Breast epithelium (tissue), 4 donors: ENCODE measurements at regions of chr14 and their contacts with region 1.

Region 1: DNA sequence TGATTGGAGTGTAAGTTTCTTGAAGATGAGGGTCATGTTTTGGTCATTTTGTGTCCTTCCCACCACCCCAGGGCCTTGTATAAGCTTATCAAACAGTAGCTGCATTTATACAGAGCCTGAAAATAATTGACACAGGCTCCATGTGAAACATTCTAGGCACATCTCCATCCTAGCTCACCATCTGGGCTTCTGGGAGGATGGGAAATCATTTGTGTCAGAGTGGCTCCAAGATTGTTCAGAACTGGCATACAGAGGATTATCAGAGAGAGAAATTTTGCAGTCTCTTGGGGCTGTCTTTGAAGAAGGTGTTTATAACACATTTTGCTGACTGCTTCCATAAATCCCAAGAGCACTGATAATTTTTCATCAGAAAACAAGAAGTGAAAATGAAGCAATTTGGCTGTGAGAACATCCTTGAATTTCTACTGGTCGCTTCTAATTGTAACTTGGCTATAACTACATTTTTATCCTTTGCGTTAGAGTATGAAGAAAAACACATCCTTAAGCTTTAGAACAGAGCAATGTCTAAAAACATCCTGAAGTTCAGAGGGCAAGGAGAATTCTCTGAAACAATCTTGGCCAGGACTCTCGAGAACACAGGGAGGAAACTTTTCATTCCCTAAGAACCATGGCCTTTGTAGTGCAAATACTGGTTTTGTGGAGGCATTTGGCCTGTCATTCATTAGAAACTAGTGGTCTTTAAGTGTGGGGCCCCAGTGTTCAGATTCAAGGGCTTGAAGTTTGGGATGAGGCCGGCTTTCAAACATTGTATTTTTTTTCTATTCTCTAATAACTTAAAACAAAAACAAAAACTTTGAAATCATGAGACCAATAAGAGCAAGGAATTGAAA is 151.1 kb downstream of the DACT1 start:
- DNase-seq: no peak
- H3K4me3 ChIP-seq: no peak overlapping the region
- H3K27ac ChIP-seq: no peak overlapping the region
- H3K4me1 ChIP-seq: no peaks in the 10 kb centered on the region
- H3K27me3 ChIP-seq: no peaks in the 10 kb centered on the region
- CTCF ChIP-seq: no peak
- POLR2A ChIP-seq: no peak

Region 2: GRCh38 chr14:58341152-58341748 is 447.6 kb before region 1 on chr14:
- intact Hi-C with region 1: no loop called
- DNase-seq: no peak
- H3K4me3 ChIP-seq: no peak overlapping the region
- H3K27ac ChIP-seq: no peak overlapping the region
- H3K4me1 ChIP-seq: no peaks in the 10 kb centered on the region
- H3K27me3 ChIP-seq: no peaks in the 10 kb centered on the region
- CTCF ChIP-seq: no peak
- POLR2A ChIP-seq: no peak

Region 3: GRCh38 chr14:58749066-58749669 is 39.7 kb before region 1 on chr14:
- intact Hi-C with region 1: no loop called
- DNase-seq: no peak
- H3K4me3 ChIP-seq: no peak overlapping the region
- H3K27ac ChIP-seq: no peak overlapping the region
- H3K4me1 ChIP-seq: peaks cover 0 to 10% of the 10 kb centered on the region in 2 donors
- H3K27me3 ChIP-seq: no peaks in the 10 kb centered on the region
- CTCF ChIP-seq: no peak
- POLR2A ChIP-seq: no peak

Region 4: GRCh38 chr14:59009967-59010366 is 221.1 kb after region 1 on chr14:
- intact Hi-C with region 1: loop called (anchors 5 kb)
- DNase-seq: no peak
- H3K4me3 ChIP-seq: no peak overlapping the region
- H3K27ac ChIP-seq: no peak overlapping the region
- H3K4me1 ChIP-seq: no peaks in the 10 kb centered on the region
- H3K27me3 ChIP-seq: no peaks in the 10 kb centered on the region
- CTCF ChIP-seq: no peak
- POLR2A ChIP-seq: no peak

Region 5: GRCh38 chr14:59150990-59151389 is 362.1 kb after region 1 on chr14:
- intact Hi-C with region 1: loop called (anchors 5 kb)
- DNase-seq: no peak
- H3K4me3 ChIP-seq: no peak overlapping the region
- H3K27ac ChIP-seq: no peak overlapping the region
- H3K4me1 ChIP-seq: no peaks in the 10 kb centered on the region
- H3K27me3 ChIP-seq: no peaks in the 10 kb centered on the region
- CTCF ChIP-seq: no peak
- POLR2A ChIP-seq: no peak

Region 6: DNA sequence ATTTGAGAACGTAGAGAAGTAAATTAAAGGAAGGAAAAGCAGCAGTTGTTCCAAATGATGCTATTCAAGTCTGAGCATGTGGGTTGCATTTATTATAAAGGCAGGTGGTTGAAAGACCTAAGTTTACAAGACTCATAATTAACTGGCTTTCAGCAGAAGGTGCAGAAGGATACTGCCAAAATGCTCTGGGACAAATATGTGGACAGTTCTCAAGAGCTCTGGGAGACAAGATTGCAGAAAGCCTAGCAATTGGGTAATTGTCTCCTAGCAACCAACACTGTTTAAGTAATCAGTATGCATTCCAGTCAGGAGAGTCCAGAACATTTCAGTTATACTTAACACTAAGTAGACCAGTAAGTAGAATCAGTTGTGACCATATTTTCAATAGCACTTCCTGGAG is 544.8 kb after region 1 on chr14:
- intact Hi-C with region 1: no loop called
- DNase-seq: peak in 1 of 2 donors; percentile 72
- H3K4me3 ChIP-seq: no peak overlapping the region
- H3K27ac ChIP-seq: peak overlapping the region; percentile 83 to 87
- H3K4me1 ChIP-seq: peaks cover 0 to 29% of the 10 kb centered on the region in 2 donors
- H3K27me3 ChIP-seq: no peaks in the 10 kb centered on the region
- CTCF ChIP-seq: no peak
- POLR2A ChIP-seq: no peak

Region 7: DNA sequence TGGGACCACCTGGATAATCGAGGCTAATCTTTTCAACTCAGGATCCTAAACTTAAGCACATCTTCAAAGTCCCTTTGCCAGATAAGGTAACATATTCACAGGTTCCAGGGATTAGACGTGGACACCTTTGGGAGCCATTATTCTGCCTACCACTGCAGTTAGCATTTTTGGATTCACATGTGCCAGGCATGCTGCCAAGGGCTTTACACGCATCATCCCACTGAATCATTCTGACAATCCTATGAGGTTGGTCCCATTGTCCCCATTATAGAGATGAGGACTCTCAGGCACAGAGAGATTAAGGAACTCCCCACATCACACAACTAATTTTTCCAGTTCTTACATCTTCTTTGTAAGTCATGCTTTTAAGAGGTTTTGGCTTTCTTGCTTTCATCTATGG is 1047.2 kb after region 1 on chr14:
- intact Hi-C with region 1: no loop called
- DNase-seq: no peak
- H3K4me3 ChIP-seq: no peak overlapping the region
- H3K27ac ChIP-seq: no peak overlapping the region
- H3K4me1 ChIP-seq: no peaks in the 10 kb centered on the region
- H3K27me3 ChIP-seq: no peaks in the 10 kb centered on the region
- CTCF ChIP-seq: no peak
- POLR2A ChIP-seq: no peak